ENCODE measurements at regions of chr7 and their contacts with region 1.

Region 1: DNA sequence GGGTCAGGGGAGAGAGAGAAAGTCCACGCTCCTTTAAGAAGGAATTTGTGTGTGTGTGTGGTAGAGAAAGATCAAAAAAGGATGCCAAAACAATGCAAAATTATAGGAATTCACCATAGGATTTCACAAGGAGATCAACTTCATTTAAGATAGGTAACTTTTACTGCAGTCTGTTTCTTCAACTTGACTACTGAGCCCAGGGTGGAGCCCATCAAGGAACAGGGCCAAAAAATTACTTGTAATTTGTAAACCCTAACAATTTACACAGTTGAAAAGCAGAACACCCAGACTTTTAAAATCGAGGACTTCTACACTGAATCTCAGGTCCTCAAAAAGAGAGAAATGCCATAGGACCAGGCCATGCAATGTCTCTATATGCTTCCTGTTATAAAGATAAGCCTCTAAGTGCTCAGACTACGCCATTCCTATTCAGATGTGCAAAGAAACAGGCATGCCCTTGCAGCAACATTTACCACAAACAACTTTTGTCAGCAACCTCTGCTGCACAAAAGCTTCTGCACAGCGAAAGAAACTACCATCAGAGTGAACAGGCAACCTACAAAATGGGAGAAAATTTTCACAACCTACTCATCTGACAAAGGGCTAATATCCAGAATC is 10.6 kb upstream of the GIMAP4 start:
- DNase-seq: no peak
- ATAC-seq: peak; percentile 70
- H3K4me3 Mint-ChIP-seq: peak overlapping the region; percentile 9
- H3K27ac Mint-ChIP-seq: peak overlapping the region; percentile 91
- H3K4me1 Mint-ChIP-seq: peaks cover 71% of the 10 kb centered on the region
- H3K27me3 Mint-ChIP-seq: no peaks in the 10 kb centered on the region

Region 2: DNA sequence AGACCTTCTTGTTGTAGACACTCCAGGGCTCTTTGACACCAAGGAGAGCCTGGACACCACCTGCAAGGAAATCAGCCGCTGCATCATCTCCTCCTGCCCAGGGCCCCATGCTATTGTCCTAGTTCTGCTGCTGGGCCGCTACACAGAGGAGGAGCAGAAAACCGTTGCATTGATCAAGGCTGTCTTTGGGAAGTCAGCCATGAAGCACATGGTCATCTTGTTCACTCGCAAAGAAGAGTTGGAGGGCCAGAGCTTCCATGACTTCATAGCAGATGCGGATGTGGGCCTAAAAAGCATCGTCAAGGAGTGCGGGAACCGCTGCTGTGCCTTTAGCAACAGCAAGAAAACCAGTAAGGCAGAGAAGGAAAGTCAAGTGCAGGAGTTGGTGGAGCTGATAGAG is 36.5 kb before region 1 on chr7:
- CTCF ChIA-PET with region 1: interaction called, 4 read pairs
- POLR2A ChIA-PET with region 1: interaction called, 3 read pairs
- intact Hi-C with region 1: loop called in 1 of 2 experiments (anchors 1 kb)
- DNase-seq: peak; percentile 63
- ATAC-seq: peak; percentile 38
- H3K4me3 Mint-ChIP-seq: peak overlapping the region; percentile 96
- H3K27ac Mint-ChIP-seq: peak overlapping the region; percentile 99
- H3K4me1 Mint-ChIP-seq: peaks cover 28% of the 10 kb centered on the region
- H3K27me3 Mint-ChIP-seq: no peaks in the 10 kb centered on the region

Measured in activated CD4-positive, alpha-beta T cell treated with anti-CD3 and anti-CD28 coated beads for 36 hours (primary cell).